Mammary epithelial cell (primary cell): ENCODE measurements at regions of chr17 and their contacts with region 1.

Region 1: DNA sequence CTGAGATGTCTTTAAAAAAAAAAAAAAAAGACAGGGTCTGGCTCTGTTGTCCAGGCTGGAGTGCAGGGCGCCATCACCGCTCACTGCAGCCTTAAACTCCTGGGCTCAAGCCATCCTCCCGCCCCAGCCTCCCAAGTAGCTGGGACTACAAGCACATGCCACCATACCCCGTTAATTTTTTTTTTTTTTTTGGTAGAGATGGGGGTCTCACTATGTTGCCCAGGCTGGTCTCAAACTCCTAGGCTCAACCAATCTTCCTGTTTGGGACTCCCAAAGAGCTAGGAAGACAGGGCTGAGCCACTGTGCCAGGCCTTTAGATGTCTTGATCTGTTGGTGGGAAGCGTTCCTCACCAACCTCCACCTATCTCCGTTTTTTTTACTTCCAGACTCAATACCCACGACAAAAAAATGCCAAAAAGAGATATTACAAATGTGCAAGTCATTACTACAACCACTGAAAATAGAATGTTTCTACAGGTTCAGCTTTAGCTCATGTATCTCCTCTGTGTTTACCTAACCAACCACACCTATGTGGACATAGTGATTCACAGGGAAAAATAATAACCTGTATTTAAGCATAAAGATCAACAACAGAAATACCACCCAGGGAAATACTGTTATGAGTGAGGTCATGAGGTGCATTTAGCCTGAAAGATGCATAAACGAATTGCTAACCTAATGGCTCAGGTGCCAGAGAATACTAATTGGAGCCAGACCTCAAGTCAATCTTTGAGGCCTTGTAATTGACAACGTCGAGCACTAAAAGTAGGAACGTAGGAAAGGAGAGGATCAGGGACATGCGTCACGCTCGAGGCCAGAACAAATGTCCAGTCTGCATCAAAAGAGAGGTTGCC is 22.6 kb downstream of the NACA2 start:
- DNase-seq: peak; percentile 74
- H3K4me3 ChIP-seq: no peak overlapping the region
- H3K27ac ChIP-seq: no peak overlapping the region
- H3K4me1 ChIP-seq: no peaks in the 10 kb centered on the region
- H3K27me3 ChIP-seq: no peaks in the 10 kb centered on the region
- CTCF ChIP-seq: no peak

Region 2: GRCh38 chr17:61400058-61400716 is 168.3 kb before region 1 on chr17:
- CTCF ChIA-PET with region 1: interaction called, 11 read pairs
- dilution Hi-C with region 1: no loop called
- in situ Hi-C with region 1: no loop called
- intact Hi-C with region 1: no loop called
- DNase-seq: peak; percentile 27
- H3K4me3 ChIP-seq: peak overlapping the region in 2 of 3 experiments; percentile 33 to 43
- H3K27ac ChIP-seq: no peak overlapping the region
- H3K4me1 ChIP-seq: peaks cover 6% of the 10 kb centered on the region
- H3K27me3 ChIP-seq: peaks cover 44% of the 10 kb centered on the region
- CTCF ChIP-seq: no peak

Region 3: GRCh38 chr17:61635913-61636432 is 67.5 kb after region 1 on chr17:
- CTCF ChIA-PET with region 1: no interaction called
- dilution Hi-C with region 1: no loop called
- in situ Hi-C with region 1: no loop called
- intact Hi-C with region 1: no loop called
- DNase-seq: peak; percentile 35
- H3K4me3 ChIP-seq: no peak overlapping the region
- H3K27ac ChIP-seq: no peak overlapping the region
- H3K4me1 ChIP-seq: no peaks in the 10 kb centered on the region
- H3K27me3 ChIP-seq: no peaks in the 10 kb centered on the region
- CTCF ChIP-seq: peak; percentile 74 to 81